Activated CD4-positive, alpha-beta memory T cell treated with anti-CD3 and anti-CD28 coated beads, Interleukin-2, amount 10 ng/mL, durations not matched to agents 7 days and 5 days (primary cell): ENCODE measurements at regions of chr12 and their contacts with region 1.

Region 1: GRCh38 chr12:122871851-122872780 is 23.8 kb downstream of the VPS37B start:
- DNase-seq: peak; percentile 64
- H3K4me3 Mint-ChIP-seq: peak overlapping the region; percentile 69
- H3K27ac Mint-ChIP-seq: peak overlapping the region; percentile 72
- H3K4me1 Mint-ChIP-seq: peaks cover 59% of the 10 kb centered on the region
- H3K27me3 Mint-ChIP-seq: peaks cover 1% of the 10 kb centered on the region

Region 2: GRCh38 chr12:122860346-122861090 is 11.6 kb before region 1 on chr12:
- CTCF ChIA-PET with region 1: interaction called, 23 read pairs
- POLR2A ChIA-PET with region 1: interaction called, 10 read pairs
- DNase-seq: peak; percentile 84
- H3K4me3 Mint-ChIP-seq: no peak overlapping the region
- H3K27ac Mint-ChIP-seq: no peak overlapping the region
- H3K4me1 Mint-ChIP-seq: no peaks in the 10 kb centered on the region
- H3K27me3 Mint-ChIP-seq: no peaks in the 10 kb centered on the region

Region 3: GRCh38 chr12:122888232-122888867 is 16.2 kb after region 1 on chr12:
- CTCF ChIA-PET with region 1: interaction called, 4 read pairs
- POLR2A ChIA-PET with region 1: interaction called, 32 read pairs
- DNase-seq: peak; percentile 51
- H3K4me3 Mint-ChIP-seq: peak overlapping the region; percentile 74
- H3K27ac Mint-ChIP-seq: peak overlapping the region; percentile 93
- H3K4me1 Mint-ChIP-seq: peaks cover 72% of the 10 kb centered on the region
- H3K27me3 Mint-ChIP-seq: no peaks in the 10 kb centered on the region

Region 4: GRCh38 chr12:122895705-122896636 is 23.9 kb after region 1 on chr12 and contains the start of gene VPS37B:
- CTCF ChIA-PET with region 1: interaction called, 8 read pairs
- POLR2A ChIA-PET with region 1: interaction called, 23 read pairs
- DNase-seq: peak; percentile 92
- H3K4me3 Mint-ChIP-seq: peak within 1 kb of the TSS; percentile 83
- H3K27ac Mint-ChIP-seq: peak within 1 kb of the TSS; percentile 70
- H3K4me1 Mint-ChIP-seq: peaks cover 86% of the 10 kb centered on the region
- H3K27me3 Mint-ChIP-seq: no peaks in the 10 kb centered on the region
- total RNA-seq, gene VPS37B: 27.1 to 27.7 TPM

Region 5: DNA sequence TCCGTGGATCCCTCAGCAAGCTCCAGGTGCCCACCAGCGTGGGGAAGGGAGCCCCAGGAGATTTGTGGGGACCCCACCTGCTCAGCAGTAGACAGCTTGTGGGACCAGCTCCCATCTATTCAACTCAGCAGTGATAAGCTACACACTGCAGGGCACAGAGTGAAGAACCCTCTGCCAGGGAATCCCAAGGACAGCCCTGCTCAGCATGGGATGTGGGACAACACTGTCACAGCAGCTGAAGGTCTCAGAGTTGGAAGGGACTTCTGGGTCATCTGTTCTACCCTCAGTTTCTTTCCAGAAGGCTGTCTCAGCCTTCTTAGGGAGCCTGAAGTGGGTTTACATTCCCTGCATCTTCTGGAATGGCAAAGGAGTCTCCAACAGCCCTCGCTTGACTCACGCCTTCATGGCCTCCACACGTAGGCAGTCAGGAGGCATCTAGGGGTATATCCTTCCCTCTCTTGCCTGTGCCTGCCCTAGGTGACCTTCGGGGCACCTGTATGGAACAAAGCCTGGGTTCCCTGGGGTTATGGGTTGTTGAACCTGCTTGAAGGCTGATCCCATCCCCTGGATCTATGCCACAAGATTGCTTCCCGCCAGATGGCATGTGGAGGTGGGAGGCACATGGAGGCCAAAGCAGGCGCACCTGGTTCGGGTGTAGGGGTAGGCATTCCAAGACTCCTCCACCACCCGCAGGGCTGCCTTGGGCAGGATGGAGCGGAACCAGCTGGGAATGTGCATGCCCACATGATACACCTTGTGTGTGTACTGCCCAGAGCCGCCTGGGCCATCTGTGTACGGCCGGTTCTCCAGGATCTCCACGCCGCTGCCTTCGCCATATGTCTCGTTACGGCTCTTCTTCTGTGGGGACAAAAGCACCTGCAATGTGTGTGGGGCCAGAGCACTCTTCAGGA is 141.3 kb after region 1 on chr12:
- CTCF ChIA-PET with region 1: no interaction called
- POLR2A ChIA-PET with region 1: no interaction called
- DNase-seq: no peak
- H3K4me3 Mint-ChIP-seq: no peak overlapping the region
- H3K27ac Mint-ChIP-seq: no peak overlapping the region
- H3K4me1 Mint-ChIP-seq: no peaks in the 10 kb centered on the region
- H3K27me3 Mint-ChIP-seq: no peaks in the 10 kb centered on the region